ENCODE measurements at regions of chr1 and their contacts with region 1.

Region 1: GRCh38 chr1:204828338-204828850 is 42.3 kb upstream of the NFASC start:
- DNase-seq: peak in 2 of 3 donors; percentile 46 to 59
- ATAC-seq: peak; percentile 65 to 81 (median 70)
- H3K4me3 ChIP-seq: peak overlapping the region; percentile 9 to 18 (median 13)
- H3K27ac ChIP-seq: no peak overlapping the region
- H3K4me1 ChIP-seq: no peaks in the 10 kb centered on the region
- H3K27me3 ChIP-seq: no peaks in the 10 kb centered on the region
- CTCF ChIP-seq: peak in 1 of 4 donors; percentile 8
- POLR2A ChIP-seq: no peak

Region 2: GRCh38 chr1:204390751-204391466 is 437.5 kb before region 1 on chr1:
- intact Hi-C with region 1: no loop called
- DNase-seq: no peak
- ATAC-seq: no peak
- H3K4me3 ChIP-seq: no peak overlapping the region
- H3K27ac ChIP-seq: no peak overlapping the region
- H3K4me1 ChIP-seq: no peaks in the 10 kb centered on the region
- H3K27me3 ChIP-seq: no peaks in the 10 kb centered on the region
- CTCF ChIP-seq: no peak
- POLR2A ChIP-seq: no peak

Region 3: GRCh38 chr1:204929487-204930154 is 101.2 kb after region 1 on chr1:
- intact Hi-C with region 1: loop called in 1 of 2 experiments (anchors 10 kb)
- DNase-seq: no peak
- ATAC-seq: no peak
- H3K4me3 ChIP-seq: no peak overlapping the region
- H3K27ac ChIP-seq: no peak overlapping the region
- H3K4me1 ChIP-seq: no peaks in the 10 kb centered on the region
- H3K27me3 ChIP-seq: no peaks in the 10 kb centered on the region
- CTCF ChIP-seq: no peak
- POLR2A ChIP-seq: no peak

Region 4: DNA sequence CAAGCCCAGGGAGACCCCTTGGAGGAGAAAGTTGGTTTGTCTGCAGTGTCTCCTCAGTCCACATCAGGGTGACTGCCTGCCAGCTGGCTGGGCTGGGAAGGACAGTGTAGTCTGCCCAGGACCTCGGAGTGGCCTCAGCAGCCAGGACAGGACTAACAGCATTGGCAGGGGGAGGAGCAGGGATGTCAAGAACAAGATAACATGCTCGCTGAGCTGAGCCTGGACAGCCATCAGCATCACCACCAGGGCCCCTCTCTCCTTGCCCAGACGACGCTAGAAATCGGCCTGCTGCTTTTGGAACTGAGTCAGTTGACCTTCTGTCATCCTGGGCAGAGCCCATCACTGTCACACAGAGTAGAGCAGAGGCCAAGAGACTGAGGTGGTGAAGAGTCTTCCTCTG is 131.0 kb after region 1 on chr1:
- intact Hi-C with region 1: loop called in 1 of 2 experiments (anchors 10 kb)
- DNase-seq: no peak
- ATAC-seq: no peak
- H3K4me3 ChIP-seq: no peak overlapping the region
- H3K27ac ChIP-seq: no peak overlapping the region
- H3K4me1 ChIP-seq: no peaks in the 10 kb centered on the region
- H3K27me3 ChIP-seq: no peaks in the 10 kb centered on the region
- CTCF ChIP-seq: no peak
- POLR2A ChIP-seq: no peak